ENCODE measurements at regions of chr15 and their contacts with region 1.

Region 1: DNA sequence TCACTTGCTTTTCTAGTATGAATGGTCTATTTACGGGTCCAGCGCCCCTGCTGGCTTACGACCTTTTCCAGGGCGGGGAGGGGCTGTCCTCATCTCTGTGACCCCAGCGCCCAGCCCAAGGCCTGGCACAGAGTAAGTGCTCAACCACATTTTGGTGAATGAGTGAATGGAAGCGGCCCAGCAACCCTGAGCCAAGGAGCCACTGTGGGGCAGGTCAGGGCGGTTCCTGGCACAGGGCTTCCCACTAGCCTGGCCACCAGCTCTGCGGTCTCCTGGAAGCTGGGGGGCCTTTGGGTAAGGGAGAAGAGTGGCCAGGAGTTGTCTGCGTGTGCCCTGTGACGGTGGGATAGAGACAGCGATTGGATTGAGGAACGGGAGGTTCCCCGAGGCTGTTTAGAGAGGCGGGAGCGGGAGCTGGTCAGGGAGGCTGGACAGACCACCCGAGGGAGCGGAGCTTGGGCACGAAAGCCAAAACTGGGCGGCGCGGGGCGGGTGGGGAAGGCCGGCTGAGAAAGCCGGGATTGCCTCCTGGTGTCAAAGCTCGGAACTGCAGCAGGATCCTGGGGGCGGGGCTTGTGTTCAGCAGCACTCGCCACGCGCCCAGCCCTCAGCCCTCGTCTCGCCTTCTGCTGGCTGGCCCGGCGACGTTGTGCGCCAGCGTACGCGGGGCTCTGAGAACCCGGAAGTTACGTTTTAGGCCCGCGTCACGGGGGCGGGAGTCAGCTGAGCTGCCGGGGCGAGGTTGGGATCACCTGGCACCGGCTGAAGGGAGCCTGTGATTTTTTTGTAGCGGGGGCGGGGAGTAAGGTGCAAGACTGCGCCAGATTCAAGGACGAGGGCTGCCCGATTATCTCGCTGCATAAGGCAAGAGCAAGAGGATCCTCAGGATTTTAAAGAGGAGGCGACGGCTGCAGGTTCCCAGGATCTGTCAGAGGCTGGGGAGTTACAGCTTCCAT is at the start of gene VPS18:
- DNase-seq: peak; percentile 97 to 99 (median 99)
- ATAC-seq: peak; percentile 97
- H3K4me3 ChIP-seq: peak within 1 kb of the TSS; percentile 85 to 98
- H3K4me3 Mint-ChIP-seq: peak within 1 kb of the TSS; percentile 98
- H3K27ac ChIP-seq: peak within 1 kb of the TSS; percentile 76 to 91
- H3K27ac Mint-ChIP-seq: peak within 1 kb of the TSS; percentile 96
- H3K4me1 ChIP-seq: peaks cover 19% of the 10 kb centered on the region
- H3K4me1 Mint-ChIP-seq: peaks cover 40% of the 10 kb centered on the region
- H3K27me3 ChIP-seq: no peaks in the 10 kb centered on the region
- H3K27me3 Mint-ChIP-seq: no peaks in the 10 kb centered on the region
- CTCF ChIP-seq: peak; percentile 88
- total RNA-seq, gene VPS18: 21.7 to 23.6 TPM

Region 2: GRCh38 chr15:40684381-40684780 is 209.6 kb before region 1 on chr15:
- CTCF ChIA-PET with region 1: interaction called, 7 read pairs
- POLR2A ChIA-PET with region 1: no interaction called
- intact Hi-C with region 1: loop called (anchors 1 to 5 kb)
- DNase-seq: no peak
- ATAC-seq: no peak
- H3K4me3 ChIP-seq: no peak overlapping the region
- H3K4me3 Mint-ChIP-seq: no peak overlapping the region
- H3K27ac ChIP-seq: no peak overlapping the region
- H3K27ac Mint-ChIP-seq: peak overlapping the region; percentile 8
- H3K4me1 ChIP-seq: no peaks in the 10 kb centered on the region
- H3K4me1 Mint-ChIP-seq: no peaks in the 10 kb centered on the region
- H3K27me3 ChIP-seq: no peaks in the 10 kb centered on the region
- H3K27me3 Mint-ChIP-seq: no peaks in the 10 kb centered on the region
- CTCF ChIP-seq: no peak

Region 3: DNA sequence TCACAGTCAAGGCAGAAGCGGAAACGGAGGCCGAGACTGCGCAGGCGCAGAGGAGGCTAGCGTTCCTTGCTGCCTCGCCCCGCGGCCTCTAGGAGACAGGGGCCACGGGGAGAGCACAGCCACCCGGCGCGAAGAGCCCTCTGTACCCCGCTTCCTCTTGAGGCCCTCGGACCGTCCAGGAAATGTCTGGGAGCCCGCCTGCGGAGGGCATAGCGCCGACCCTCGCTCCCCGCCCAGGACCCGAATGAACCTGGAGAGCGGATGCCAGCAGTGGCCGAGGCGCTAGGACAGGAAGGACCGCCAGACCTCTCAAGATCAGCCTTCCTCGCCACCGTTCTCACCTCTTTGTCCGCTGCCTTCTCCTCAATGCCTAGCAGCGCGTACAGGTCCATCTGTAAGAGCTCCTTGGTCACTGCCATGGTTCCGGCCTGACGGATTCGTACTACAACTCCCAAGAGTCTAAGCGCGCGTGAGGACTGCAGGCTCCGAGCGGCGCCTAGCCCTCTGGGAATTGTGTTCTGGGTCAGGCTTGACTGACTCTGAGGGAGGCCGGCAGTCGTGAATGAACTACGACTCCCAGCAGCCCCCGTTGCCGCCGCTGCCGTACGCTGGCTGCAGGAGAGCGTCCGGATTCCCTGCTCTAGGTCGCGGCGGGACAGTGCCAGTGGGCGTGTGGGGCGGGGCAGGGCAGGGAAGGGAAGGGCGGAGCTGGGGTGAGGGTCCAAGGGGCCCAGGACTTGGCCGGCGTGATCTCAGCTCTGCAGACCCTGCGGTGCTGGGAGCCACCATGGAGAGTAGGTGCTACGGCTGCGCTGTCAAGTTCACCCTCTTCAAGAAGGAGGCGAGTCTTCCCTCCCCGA is 86.8 kb before region 1 on chr15 and contains the starts of genes DNAJC17 and ZFYVE19:
- CTCF ChIA-PET with region 1: interaction called, 5 read pairs
- POLR2A ChIA-PET with region 1: interaction called, 3 read pairs
- intact Hi-C with region 1: loop called (anchors 1 kb)
- DNase-seq: peak; percentile 86 to 97 (median 94)
- ATAC-seq: peak; percentile 97
- H3K4me3 ChIP-seq: peak within 1 kb of the TSS; percentile 85 to 88
- H3K4me3 Mint-ChIP-seq: peak within 1 kb of the TSS; percentile 99
- H3K27ac ChIP-seq: peak within 1 kb of the TSS; percentile 69 to 87
- H3K27ac Mint-ChIP-seq: peak within 1 kb of the TSS; percentile 98
- H3K4me1 ChIP-seq: peaks cover 14% of the 10 kb centered on the region
- H3K4me1 Mint-ChIP-seq: peaks cover 26% of the 10 kb centered on the region
- H3K27me3 ChIP-seq: no peaks in the 10 kb centered on the region
- H3K27me3 Mint-ChIP-seq: no peaks in the 10 kb centered on the region
- CTCF ChIP-seq: peak; percentile 17
- total RNA-seq, gene DNAJC17: 11.2 to 11.9 TPM
- total RNA-seq, gene ZFYVE19: 9.6 to 11.0 TPM

Region 4: DNA sequence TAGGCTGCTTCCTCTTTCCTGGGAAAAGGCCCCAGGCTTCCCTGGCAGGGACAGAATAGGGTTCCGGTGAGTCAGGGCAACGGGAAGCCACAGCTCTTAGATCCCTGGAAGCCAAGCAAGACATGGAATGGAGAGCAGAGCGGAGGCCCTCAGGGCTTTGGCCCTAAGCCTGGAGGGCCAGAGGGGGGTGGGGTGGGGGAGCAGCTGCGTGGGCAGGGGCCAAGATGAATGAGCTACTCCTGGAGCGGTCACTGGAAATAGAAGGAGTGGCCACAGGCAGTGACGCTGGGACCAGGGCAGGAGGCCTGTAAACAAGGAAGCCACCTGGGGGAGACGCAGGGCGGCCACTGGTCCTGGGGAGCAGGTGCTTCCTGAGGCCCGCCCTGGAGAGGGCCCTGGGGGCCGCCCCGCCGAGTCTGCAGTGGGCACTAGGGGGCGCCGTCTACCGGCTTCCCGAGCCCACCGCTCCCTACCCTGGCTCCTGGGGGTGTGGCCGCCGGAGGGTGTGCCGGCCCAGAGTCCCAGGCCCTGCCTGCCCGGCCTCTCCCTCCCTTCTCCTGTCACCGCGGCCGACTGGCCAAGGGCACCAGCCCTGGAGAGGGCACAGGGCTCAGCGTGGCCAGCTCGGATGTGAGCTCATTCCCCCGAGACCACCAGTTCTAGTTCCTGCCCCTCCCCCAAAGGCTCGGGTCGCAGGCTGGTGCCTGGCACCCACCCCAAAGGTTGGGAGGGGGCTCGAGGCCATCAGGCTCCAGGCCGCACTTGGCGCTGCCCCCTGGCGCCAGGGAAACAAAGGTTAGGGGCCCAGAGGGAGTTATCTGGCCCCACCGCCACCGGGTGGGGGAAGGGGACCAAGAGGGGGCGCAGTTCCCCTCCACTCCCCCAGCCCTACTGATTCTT is 12.3 kb after region 1 on chr15:
- CTCF ChIA-PET with region 1: interaction called, 59 read pairs
- POLR2A ChIA-PET with region 1: interaction called, 9 read pairs
- intact Hi-C with region 1: loop called in 1 of 2 experiments (anchors 1 kb)
- DNase-seq: peak; percentile 50 to 84 (median 76)
- ATAC-seq: peak; percentile 63
- H3K4me3 ChIP-seq: peak overlapping the region; percentile 68 to 80
- H3K4me3 Mint-ChIP-seq: peak overlapping the region; percentile 83
- H3K27ac ChIP-seq: peak overlapping the region; percentile 19 to 82
- H3K27ac Mint-ChIP-seq: peak overlapping the region; percentile 87
- H3K4me1 ChIP-seq: peaks cover 18% of the 10 kb centered on the region
- H3K4me1 Mint-ChIP-seq: peaks cover 38% of the 10 kb centered on the region
- H3K27me3 ChIP-seq: no peaks in the 10 kb centered on the region
- H3K27me3 Mint-ChIP-seq: no peaks in the 10 kb centered on the region
- CTCF ChIP-seq: peak; percentile 85

Region 5: DNA sequence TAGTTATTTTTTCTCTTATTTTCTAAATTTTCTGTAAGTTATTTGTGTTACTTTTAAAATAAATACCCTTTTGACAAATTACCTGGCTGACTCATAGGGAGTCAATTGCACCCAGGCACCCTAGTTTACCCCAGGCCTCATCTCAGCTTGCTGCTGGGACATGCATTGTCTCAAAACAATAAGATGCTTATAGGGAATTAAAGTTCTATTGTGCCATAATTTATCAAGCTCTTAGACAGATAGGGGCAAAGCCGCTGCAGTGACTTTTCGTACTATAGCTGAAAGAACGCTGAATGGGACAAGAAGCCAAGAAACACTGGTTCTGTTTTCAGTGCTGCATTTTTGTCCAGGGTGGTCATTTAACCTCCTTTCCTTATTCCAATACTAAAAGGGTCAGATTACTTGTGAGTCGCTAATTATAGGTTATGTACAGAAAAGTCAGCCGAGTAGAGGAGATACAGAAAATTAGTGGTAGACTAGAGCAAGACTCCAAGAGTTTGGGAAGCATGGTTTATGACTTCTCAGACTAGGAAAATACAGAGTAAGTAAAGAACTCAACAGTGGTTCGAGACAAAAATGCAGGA is 286.3 kb after region 1 on chr15:
- CTCF ChIA-PET with region 1: interaction called, 20 read pairs
- POLR2A ChIA-PET with region 1: no interaction called
- intact Hi-C with region 1: no loop called
- DNase-seq: no peak
- ATAC-seq: no peak
- H3K4me3 ChIP-seq: no peak overlapping the region
- H3K4me3 Mint-ChIP-seq: no peak overlapping the region
- H3K27ac ChIP-seq: no peak overlapping the region
- H3K27ac Mint-ChIP-seq: no peak overlapping the region
- H3K4me1 ChIP-seq: no peaks in the 10 kb centered on the region
- H3K4me1 Mint-ChIP-seq: no peaks in the 10 kb centered on the region
- H3K27me3 ChIP-seq: no peaks in the 10 kb centered on the region
- H3K27me3 Mint-ChIP-seq: peaks cover 3% of the 10 kb centered on the region
- CTCF ChIP-seq: no peak

Region 6: GRCh38 chr15:42273102-42273899 is 1379.3 kb after region 1 on chr15 and contains the starts of genes GANC and TMEM87A:
- CTCF ChIA-PET with region 1: no interaction called
- POLR2A ChIA-PET with region 1: no interaction called
- intact Hi-C with region 1: loop called in 1 of 2 experiments (anchors 2 kb)
- DNase-seq: peak; percentile 91 to 99 (median 95)
- ATAC-seq: peak; percentile 90
- H3K4me3 ChIP-seq: peak within 1 kb of the TSS; percentile 90 to 93
- H3K4me3 Mint-ChIP-seq: peak within 1 kb of the TSS; percentile 99
- H3K27ac ChIP-seq: peak within 1 kb of the TSS; percentile 95 to 96
- H3K27ac Mint-ChIP-seq: peak within 1 kb of the TSS; percentile 100
- H3K4me1 ChIP-seq: peaks cover 38% of the 10 kb centered on the region
- H3K4me1 Mint-ChIP-seq: peaks cover 61% of the 10 kb centered on the region
- H3K27me3 ChIP-seq: no peaks in the 10 kb centered on the region
- H3K27me3 Mint-ChIP-seq: no peaks in the 10 kb centered on the region
- CTCF ChIP-seq: no peak
- total RNA-seq, gene GANC: 15.5 to 19.3 TPM
- total RNA-seq, gene TMEM87A: 71.0 to 74.5 TPM

Measured in CD8-positive, alpha-beta T cell (primary cell).